ENCODE measurements at regions of chr4 and their contacts with region 1.

Region 1: DNA sequence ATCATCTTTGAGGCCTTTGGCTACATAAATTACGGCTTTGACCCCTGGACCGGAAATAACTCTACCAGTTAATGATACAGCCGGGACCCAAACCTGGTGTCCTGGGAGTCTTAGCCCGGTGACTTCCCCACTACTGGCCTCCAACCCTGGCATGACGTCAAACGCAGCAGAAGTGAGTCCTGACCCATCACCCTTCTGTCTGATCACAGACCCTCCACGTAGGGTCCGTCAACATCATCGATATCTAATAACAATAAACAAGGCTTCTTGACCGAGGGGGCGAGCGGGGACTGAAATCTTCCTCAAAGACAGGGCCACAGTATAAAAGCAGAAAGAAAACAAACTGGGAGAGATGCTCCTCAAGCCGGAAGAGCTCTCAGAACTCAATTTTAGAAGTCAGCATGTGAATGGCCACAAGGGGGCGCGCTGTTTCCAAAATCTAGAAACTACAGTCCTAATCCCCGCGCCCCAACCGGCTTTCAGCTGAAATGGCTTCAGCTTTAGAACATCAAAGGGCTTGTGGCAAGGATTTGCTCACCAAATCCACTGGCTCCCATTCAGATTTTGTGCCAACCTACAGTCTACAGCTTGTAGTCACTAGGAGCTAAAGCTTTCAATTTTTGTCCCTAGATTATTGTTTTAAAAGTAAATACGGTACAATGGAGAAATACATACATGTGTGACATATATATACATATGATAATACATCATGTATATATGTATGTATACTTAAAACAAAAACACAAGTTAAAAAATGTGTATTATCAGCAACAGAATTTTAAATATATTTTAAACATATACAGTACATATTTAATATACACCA is 46.4 kb upstream of the ENPP6 start:
- DNase-seq: peak; percentile 97
- H3K4me3 Mint-ChIP-seq: no peak overlapping the region
- H3K27ac Mint-ChIP-seq: peak overlapping the region; percentile 11
- H3K4me1 Mint-ChIP-seq: peaks cover 52% of the 10 kb centered on the region
- H3K27me3 Mint-ChIP-seq: no peaks in the 10 kb centered on the region

Region 2: DNA sequence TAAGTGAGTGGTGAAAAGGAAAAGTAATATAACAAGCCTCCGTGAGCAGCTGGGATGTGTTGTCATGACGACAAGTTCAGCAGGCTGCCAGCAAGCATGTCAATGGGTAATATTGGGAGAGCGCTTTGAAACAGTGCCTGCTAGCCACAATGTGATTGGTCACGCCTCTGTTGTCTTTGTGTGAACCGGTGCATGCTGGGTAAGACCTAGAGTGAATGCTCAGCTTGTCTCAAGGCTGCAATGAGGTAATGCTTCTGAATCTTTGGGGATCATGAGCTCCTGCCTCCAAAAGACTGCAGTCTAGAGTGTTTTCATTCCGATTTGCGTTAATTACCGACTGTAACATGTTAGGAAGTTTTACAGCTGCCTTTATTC is 304.1 kb before region 1 on chr4:
- CTCF ChIA-PET with region 1: no interaction called
- POLR2A ChIA-PET with region 1: no interaction called
- intact Hi-C with region 1: no loop called
- DNase-seq: no peak
- H3K4me3 Mint-ChIP-seq: no peak overlapping the region
- H3K27ac Mint-ChIP-seq: no peak overlapping the region
- H3K4me1 Mint-ChIP-seq: no peaks in the 10 kb centered on the region
- H3K27me3 Mint-ChIP-seq: peaks cover 4% of the 10 kb centered on the region

Region 3: GRCh38 chr4:184250795-184251669 is 13.1 kb before region 1 on chr4:
- CTCF ChIA-PET with region 1: interaction called, 47 read pairs
- POLR2A ChIA-PET with region 1: interaction called, 6 read pairs
- intact Hi-C with region 1: no loop called
- DNase-seq: peak; percentile 45
- H3K4me3 Mint-ChIP-seq: peak overlapping the region; percentile 31
- H3K27ac Mint-ChIP-seq: peak overlapping the region; percentile 26
- H3K4me1 Mint-ChIP-seq: peaks cover 18% of the 10 kb centered on the region
- H3K27me3 Mint-ChIP-seq: peaks cover 2% of the 10 kb centered on the region

Region 4: DNA sequence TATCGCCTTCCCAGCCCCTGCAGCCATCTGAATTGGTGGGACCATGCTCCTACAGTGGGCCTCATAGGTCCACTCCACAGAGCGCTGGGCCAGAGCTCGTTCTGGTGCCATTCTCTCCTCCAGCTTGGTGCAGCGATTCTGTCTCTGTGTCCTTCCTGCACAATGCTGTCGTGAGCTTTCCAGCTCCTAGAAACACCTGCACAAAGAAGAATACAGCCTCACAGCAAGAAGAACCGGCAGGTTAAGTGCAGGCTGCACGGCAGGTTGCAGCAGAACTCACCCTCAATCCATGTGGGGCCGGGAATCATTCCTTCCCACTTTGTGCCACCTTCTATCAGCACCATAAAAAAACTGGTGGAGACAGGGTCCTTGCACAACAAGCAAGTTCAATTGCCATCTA is 54.7 kb after region 1 on chr4:
- CTCF ChIA-PET with region 1: interaction called, 5 read pairs
- POLR2A ChIA-PET with region 1: no interaction called
- intact Hi-C with region 1: loop called (anchors 1 kb)
- DNase-seq: no peak
- H3K4me3 Mint-ChIP-seq: no peak overlapping the region
- H3K27ac Mint-ChIP-seq: no peak overlapping the region
- H3K4me1 Mint-ChIP-seq: peaks cover 34% of the 10 kb centered on the region
- H3K27me3 Mint-ChIP-seq: peaks cover 1% of the 10 kb centered on the region

Region 5: DNA sequence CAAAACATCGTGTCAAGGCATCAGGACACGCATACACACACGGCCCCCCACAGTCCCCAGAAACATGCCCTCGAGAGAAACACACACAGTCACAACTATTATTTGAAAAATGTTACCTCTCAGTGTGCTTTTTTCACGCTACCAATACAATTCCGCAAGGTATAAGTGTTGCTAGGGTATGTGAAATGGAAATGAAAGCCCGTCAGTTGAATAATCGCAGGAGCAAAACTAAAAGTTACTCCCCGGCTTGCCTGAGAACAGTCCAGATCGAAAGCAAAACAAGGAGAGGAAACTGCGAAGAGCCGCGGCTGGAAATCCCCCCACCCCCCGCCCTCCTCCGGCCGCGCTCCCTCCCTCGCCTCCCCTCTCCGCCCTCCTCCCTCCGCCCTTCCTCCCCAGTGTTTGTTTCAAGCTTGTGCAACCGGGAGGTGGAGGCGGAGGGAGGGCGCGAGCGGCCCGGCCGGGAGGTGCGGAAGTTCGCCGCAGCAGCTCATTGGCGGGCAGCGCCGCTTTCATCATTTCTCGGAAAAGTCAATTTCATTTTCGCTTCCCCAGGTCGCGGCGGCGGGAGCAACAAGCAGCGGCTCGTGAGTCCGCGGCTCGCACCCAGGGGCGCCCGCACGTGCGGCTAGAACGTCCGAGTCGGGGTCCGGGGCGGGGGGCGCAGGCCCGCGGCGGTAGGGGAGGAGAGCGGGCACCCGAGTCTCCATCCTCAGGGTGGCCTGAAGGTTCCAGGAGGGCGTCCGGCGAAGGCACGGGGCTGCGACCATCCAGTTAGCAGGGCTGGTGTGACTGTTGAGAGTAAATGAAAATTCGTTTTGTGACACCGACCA is 210.4 kb after region 1 on chr4 and contains the start of gene IRF2:
- CTCF ChIA-PET with region 1: interaction called, 39 read pairs
- POLR2A ChIA-PET with region 1: interaction called, 40 read pairs
- intact Hi-C with region 1: loop called (anchors 1 kb)
- DNase-seq: peak; percentile 99
- H3K4me3 Mint-ChIP-seq: peak within 1 kb of the TSS; percentile 99
- H3K27ac Mint-ChIP-seq: peak within 1 kb of the TSS; percentile 100
- H3K4me1 Mint-ChIP-seq: peaks cover 57% of the 10 kb centered on the region
- H3K27me3 Mint-ChIP-seq: no peaks in the 10 kb centered on the region
- total RNA-seq, gene IRF2: 48.1 to 50.9 TPM

Region 6: DNA sequence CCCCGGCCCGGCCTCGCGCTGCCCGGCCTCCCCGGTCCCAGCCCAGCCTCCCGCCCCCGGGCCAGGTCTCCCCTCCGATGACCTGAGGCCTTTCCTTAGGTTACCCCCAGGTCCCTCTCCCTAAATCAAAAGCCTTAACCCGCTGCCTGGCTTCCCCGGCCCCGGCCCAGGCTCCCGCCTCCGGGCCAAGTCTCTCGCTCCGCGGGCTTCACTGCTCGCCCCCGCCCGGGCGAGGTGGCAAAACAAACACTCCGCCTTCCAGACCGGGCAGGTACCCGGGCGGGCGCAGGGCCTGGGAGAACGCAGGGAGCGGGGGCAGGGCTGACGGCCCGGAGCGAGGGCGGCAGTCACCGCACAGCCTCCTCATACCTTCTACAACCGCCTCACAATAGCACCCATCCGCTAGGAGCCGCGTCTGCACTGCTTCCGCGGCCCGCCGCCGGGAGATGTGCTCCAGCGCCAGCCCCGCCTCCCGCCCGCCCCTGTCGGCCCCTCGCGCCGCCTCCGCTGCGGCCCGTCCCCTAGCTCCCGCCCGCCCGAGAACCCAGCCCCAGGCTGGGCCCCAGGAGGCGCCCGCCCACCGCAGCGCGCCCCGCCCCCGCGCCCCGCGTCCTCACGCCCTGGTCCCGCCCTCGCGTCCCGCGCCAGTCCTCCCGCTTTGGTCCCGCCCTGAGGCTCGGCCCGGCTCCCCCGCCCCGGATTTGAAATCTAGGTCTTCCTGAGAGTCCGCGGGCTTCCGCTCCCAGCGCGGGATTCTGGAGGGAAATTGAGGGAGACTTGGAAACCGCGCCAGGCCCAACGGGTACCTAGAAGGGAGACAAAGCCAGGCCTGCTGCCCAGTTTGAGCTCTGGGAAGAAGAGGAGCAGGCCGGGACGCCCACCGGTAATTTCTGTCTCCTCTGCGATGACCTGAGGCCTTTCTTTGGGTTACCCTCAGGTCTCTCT is 385.2 kb after region 1 on chr4 and contains the starts of genes CASP3 and PRIMPOL:
- CTCF ChIA-PET with region 1: interaction called, 20 read pairs
- POLR2A ChIA-PET with region 1: interaction called, 6 read pairs
- intact Hi-C with region 1: loop called (anchors 1 kb)
- DNase-seq: peak; percentile 98
- H3K4me3 Mint-ChIP-seq: peak within 1 kb of the TSS; percentile 91
- H3K27ac Mint-ChIP-seq: peak within 1 kb of the TSS; percentile 91
- H3K4me1 Mint-ChIP-seq: peaks cover 50% of the 10 kb centered on the region
- H3K27me3 Mint-ChIP-seq: no peaks in the 10 kb centered on the region
- total RNA-seq, gene CASP3: 54.0 to 54.4 TPM
- total RNA-seq, gene PRIMPOL: 23.1 to 27.1 TPM

Region 7: GRCh38 chr4:184825896-184826690 is 562.0 kb after region 1 on chr4 and contains the start of gene ACSL1:
- CTCF ChIA-PET with region 1: interaction called, 4 read pairs
- POLR2A ChIA-PET with region 1: no interaction called
- intact Hi-C with region 1: loop called (anchors 10 kb)
- DNase-seq: peak; percentile 84
- H3K4me3 Mint-ChIP-seq: peak within 1 kb of the TSS; percentile 87
- H3K27ac Mint-ChIP-seq: peak within 1 kb of the TSS; percentile 75
- H3K4me1 Mint-ChIP-seq: peaks cover 37% of the 10 kb centered on the region
- H3K27me3 Mint-ChIP-seq: no peaks in the 10 kb centered on the region
- total RNA-seq, gene ACSL1: 22.0 to 22.2 TPM

Measured in activated CD4-positive, alpha-beta memory T cell treated with anti-CD3 and anti-CD28 coated beads for 36 hours (primary cell).